Activated CD4-positive, alpha-beta memory T cell treated with anti-CD3 and anti-CD28 coated beads, Interleukin-2, amount 10 ng/mL, durations not matched to agents 7 days and 5 days (primary cell): ENCODE measurements at regions of chr17 and their contacts with region 1.

Region 1: DNA sequence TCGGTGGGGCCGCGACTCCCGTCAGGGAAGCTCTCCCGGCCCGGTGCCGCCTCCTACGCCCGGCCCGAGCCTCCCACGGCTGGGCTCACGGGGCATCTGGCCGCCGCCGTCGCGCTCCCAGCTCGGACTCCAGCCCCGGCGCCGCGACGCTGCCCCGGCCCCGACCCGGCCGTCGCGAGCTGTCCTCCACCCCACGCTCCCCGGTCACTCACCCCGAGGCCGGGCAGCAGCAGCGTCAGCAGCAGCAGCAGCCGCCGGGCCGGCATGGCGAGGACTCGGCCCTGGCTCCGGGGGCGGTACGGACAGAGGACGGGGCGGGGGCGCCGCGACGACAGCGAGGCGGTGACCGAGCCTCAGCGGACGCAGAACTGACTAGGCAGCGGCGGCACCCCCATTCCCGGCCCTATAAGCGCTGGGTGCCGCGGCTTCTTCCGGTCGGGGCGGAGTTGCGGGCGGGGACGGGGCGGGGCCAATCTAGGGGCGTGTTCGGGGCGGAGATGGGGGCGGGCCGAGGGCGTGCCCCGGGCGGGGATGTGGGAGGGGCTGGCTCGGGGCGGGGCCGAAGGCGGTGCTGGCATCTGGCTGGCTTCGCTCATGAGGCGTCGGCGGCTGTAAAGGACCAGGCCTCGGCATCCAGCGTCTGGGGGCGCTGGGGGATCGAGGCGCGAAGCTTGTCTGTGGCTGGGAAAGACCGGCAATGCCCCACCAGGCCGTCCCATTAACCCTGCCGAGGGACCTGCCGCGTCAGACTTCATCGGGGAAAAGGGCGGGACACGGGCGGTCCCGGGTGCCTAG is at the start of gene ERN1:
- DNase-seq: peak; percentile 92
- H3K4me3 Mint-ChIP-seq: peak within 1 kb of the TSS; percentile 84
- H3K27ac Mint-ChIP-seq: peak within 1 kb of the TSS; percentile 91
- H3K4me1 Mint-ChIP-seq: peaks cover 53% of the 10 kb centered on the region
- H3K27me3 Mint-ChIP-seq: no peaks in the 10 kb centered on the region
- total RNA-seq, gene ERN1: 126 to 128 TPM

Region 2: DNA sequence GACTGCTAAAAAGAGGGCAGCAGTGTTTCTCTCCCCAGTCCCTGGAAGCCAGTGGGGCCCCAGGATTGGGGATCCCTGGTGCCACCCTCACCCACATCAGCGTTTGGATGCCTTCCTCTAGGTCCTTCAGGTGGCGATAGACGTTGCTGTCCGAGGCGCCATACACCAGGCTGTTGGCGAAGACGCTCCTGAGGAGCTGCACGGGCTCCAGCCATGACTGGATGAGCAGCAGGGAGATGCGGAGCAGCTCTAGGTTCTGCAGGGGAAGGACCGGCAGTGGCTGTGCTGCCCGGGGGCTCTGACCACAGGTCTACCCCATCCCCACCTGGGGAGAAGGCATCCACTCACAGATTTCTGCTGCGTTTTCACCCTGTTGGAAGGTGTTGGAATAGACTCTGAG is 249.3 kb before region 1 on chr17:
- CTCF ChIA-PET with region 1: no interaction called
- POLR2A ChIA-PET with region 1: no interaction called
- DNase-seq: no peak
- H3K4me3 Mint-ChIP-seq: no peak overlapping the region
- H3K27ac Mint-ChIP-seq: no peak overlapping the region
- H3K4me1 Mint-ChIP-seq: no peaks in the 10 kb centered on the region
- H3K27me3 Mint-ChIP-seq: peaks cover 5% of the 10 kb centered on the region

Region 3: DNA sequence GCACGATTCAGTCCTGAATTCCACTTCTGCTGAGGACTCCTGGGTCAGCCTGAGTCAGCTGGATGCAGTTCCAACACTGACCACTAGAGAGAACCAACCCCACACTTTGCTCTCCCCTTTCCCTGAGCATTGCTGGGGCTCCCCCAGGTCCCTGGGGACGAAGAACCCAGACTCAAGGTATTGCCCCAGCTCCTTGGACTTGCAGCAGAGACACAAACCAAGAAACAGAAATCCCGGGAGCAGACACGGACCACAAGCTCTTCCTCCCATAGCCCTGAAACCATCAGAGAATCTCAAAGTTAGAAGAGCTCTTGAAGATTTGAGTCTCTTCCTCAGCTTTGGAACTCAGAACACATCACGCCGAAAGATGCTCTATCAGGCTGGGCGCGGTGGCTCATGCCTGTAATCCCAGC is 210.6 kb before region 1 on chr17:
- CTCF ChIA-PET with region 1: interaction called, 55 read pairs
- POLR2A ChIA-PET with region 1: interaction called, 11 read pairs
- DNase-seq: peak; percentile 79
- H3K4me3 Mint-ChIP-seq: no peak overlapping the region
- H3K27ac Mint-ChIP-seq: no peak overlapping the region
- H3K4me1 Mint-ChIP-seq: peaks cover 8% of the 10 kb centered on the region
- H3K27me3 Mint-ChIP-seq: peaks cover 19% of the 10 kb centered on the region

Region 4: DNA sequence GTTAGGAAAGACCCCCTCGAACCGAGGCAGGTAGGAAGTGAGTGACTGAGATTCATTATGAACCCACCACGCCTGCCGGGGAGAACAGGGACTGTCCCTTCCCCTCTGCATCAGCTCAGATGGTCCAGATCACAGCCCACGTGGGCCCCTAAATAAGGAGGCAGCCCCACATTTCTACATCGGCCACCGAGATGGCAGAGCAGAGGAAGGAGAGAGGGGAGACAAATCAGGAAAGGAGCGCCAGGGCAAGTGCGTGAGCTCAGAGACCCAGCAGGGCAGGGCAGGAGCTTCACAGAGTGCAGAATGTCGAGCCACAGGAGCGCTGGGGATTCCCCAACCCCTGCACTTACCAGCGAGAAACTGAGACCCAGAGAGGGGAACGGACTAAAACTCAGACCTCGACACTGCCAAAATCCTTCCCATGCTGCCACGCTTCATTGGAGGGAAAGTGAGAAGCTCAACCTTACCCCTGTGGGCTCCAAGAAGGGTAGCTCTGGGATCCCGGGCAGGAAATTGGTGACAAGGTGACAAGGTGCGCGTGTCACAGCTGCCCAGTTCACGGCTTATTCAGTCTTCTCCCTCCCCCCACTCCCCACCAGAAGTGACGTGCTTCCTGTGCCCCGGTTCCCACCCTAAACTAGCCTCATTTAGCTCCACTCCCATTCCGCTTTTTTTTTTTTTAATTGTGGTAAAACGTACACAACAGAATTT is 109.8 kb before region 1 on chr17 and contains the start of gene ICAM2:
- CTCF ChIA-PET with region 1: interaction called, 510 read pairs
- POLR2A ChIA-PET with region 1: interaction called, 39 read pairs
- DNase-seq: peak; percentile 95
- H3K4me3 Mint-ChIP-seq: peak within 1 kb of the TSS; percentile 99
- H3K27ac Mint-ChIP-seq: peak within 1 kb of the TSS; percentile 100
- H3K4me1 Mint-ChIP-seq: peaks cover 66% of the 10 kb centered on the region
- H3K27me3 Mint-ChIP-seq: no peaks in the 10 kb centered on the region
- total RNA-seq, gene ICAM2: 118 to 122 TPM

Region 5: DNA sequence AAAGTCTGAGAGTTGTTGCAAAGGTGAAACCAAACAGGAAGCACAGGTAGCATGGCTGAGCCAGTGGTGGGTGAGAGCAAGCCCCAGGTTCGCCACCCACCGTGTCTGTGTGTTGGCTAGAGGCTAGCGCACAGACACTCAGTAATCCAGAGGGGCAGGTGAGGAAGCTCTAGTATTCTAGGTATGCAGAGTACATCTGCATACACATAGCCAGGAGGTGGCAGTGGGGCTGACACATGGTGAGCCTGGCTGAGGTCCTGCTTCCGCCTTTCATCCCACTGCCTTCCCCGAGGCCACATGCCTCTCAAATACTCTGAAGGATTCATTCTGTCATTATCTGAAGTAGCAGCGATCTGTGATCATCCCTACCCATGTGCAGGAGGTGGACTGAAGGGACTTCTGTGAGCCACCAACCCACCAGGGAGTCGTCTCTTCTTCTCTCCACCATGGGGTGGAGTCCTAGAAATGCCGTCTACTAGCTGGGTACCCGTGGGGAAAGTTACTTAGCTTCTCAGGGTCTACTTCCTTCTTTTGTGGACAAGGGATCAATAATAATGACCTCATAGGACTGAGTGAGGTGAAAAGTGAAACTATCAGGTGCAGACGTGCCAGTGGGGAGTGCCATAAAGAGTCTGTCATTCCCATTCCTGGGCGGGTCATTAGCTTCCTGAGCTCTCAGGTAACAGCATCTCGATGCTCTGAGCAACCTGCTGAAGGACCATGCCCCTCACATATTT is 73.5 kb before region 1 on chr17:
- CTCF ChIA-PET with region 1: interaction called, 92 read pairs
- POLR2A ChIA-PET with region 1: interaction called, 31 read pairs
- DNase-seq: no peak
- H3K4me3 Mint-ChIP-seq: no peak overlapping the region
- H3K27ac Mint-ChIP-seq: peak overlapping the region; percentile 70
- H3K4me1 Mint-ChIP-seq: peaks cover 79% of the 10 kb centered on the region
- H3K27me3 Mint-ChIP-seq: no peaks in the 10 kb centered on the region

Region 6: DNA sequence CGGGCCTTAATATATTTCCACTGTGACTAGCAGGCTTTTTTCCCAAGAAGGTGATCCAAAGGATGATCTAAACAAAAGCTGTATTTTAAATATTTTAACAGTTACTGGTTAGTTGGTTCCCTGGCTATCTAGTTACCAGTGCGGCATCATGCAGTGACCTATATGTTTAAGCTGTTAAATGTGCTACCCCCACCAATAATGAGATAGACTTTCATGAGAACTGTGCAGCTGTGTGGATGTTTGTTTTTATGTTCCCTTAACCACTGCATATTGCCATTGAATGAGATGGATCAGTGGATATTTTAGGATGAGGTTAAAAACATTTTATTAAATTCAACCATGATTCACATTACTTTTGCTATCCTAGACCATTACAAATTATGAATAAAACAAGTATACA is 17.0 kb before region 1 on chr17:
- CTCF ChIA-PET with region 1: interaction called, 10 read pairs
- POLR2A ChIA-PET with region 1: interaction called, 52 read pairs
- DNase-seq: no peak
- H3K4me3 Mint-ChIP-seq: no peak overlapping the region
- H3K27ac Mint-ChIP-seq: no peak overlapping the region
- H3K4me1 Mint-ChIP-seq: peaks cover 67% of the 10 kb centered on the region
- H3K27me3 Mint-ChIP-seq: no peaks in the 10 kb centered on the region

Region 7: DNA sequence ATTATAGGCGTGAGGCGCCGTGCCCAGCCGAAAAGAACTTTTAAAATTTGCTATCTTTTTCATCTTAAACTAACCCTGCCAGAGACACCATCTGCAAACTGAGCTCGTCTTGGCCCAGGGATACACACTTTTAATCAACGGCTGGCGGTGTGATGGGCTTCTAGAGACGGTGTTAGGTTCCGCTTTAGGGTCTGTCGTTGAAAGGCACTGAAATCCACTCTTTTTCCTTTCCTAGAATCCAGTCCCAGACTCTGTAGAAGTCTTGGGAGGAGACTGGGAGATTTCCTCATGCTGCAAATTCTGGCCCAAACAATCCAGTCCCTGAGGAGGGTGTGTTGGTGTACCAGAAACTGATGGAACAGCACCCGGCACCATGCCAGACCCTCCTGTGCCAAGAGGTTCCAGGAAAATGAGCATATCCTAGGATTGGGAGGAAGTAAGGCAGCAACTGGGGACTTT is 185.1 kb after region 1 on chr17:
- CTCF ChIA-PET with region 1: no interaction called
- POLR2A ChIA-PET with region 1: no interaction called
- DNase-seq: no peak
- H3K4me3 Mint-ChIP-seq: no peak overlapping the region
- H3K27ac Mint-ChIP-seq: no peak overlapping the region
- H3K4me1 Mint-ChIP-seq: no peaks in the 10 kb centered on the region
- H3K27me3 Mint-ChIP-seq: peaks cover 9% of the 10 kb centered on the region

Region 8: DNA sequence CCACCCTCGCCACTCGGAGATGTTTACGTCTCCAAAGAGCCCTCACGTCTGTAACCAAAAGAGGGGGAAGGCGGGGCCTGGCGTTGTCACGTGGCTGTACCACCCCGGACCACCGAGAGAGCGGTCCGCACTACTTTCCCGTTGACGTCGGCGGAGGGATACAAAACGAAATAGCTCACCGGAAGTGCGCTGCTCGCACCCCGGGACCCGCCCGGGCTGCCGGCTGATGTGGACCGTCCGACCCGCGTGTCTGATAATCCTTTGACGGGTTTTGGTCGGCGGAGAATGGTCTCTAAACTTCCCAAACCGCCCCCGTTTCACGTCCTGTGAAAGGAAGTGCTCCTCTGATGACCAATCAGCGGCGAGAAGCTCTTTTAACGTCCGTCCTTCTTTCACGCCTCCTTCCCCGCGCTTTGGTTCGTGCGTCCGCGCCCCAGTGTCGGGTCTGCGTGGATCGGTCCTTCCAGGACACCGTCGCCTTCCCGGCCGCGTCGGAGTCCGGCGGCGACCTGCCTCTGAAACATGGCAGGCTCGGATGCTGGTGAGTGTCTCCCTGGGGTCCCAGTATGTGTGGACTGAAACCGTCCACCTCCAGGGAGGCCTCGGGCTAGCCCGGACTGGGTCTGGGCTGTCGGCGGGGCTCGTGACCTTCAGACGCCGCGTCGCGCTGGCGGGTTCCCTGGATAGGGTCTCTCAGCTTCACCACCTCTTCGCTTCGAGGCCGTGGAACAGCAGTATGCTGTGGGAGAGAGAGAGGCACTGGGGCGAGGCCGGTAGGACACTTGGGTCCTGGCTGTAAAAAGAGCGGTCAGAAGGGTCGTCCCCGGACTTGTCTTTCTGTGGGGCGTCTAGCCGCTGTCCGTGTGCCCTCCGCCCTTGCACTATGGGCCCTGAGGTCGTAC is 376.9 kb after region 1 on chr17 and contains the start of gene CEP95:
- CTCF ChIA-PET with region 1: no interaction called
- POLR2A ChIA-PET with region 1: interaction called, 14 read pairs
- DNase-seq: peak; percentile 95
- H3K4me3 Mint-ChIP-seq: peak within 1 kb of the TSS; percentile 99
- H3K27ac Mint-ChIP-seq: peak within 1 kb of the TSS; percentile 100
- H3K4me1 Mint-ChIP-seq: peaks cover 56% of the 10 kb centered on the region
- H3K27me3 Mint-ChIP-seq: no peaks in the 10 kb centered on the region
- total RNA-seq, gene CEP95: 47.7 to 48.5 TPM